ENCODE measurements at regions of chr11 and their contacts with region 1.

Region 1: DNA sequence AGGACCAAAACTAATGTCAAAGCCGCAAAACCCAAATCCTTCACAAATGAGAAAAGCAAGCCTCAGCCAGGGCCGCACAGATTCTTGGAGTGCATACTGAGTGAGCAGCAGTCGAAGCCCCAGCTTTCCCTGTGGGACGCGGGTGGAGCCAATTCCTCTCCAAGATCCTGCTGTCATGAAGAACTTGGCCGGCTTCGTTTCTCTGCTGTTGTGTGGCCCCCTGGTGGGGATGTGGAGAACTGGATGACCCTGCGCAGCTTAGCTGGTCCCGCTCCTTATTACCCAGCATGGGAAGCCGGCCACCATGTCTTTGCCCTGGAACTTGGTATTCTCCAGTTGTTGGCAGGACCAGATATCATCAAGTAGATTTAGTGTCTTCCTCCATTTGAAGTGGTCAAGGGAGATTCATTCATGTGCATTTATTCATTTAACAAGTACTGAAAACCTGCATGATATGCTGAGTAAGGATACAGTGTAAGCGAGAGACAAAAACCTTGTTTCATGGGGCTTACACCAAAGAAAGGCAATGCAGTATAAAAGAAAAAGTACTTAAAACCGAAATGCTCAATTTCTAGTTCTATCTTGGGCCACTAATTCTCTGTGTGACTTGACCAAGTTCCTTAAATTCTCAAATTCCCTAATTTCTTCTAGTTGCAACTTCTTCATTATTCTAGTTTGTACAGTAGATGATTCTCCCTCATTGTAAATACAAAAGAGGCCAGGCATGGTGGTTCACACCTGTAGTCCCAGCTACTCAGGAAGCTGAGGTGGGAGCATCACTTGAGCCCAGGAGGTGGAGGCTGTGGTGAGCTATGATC is 56.7 kb upstream of the CRTAM start:
- DNase-seq: peak; percentile 63
- ATAC-seq: peak; percentile 97
- H3K4me3 ChIP-seq: no peak overlapping the region
- H3K27ac ChIP-seq: no peak overlapping the region
- H3K4me1 ChIP-seq: no peaks in the 10 kb centered on the region
- H3K27me3 ChIP-seq: no peaks in the 10 kb centered on the region
- CTCF ChIP-seq: peak; percentile 97

Region 2: GRCh38 chr11:122578168-122578825 is 203.3 kb before region 1 on chr11:
- CTCF ChIA-PET with region 1: no interaction called
- POLR2A ChIA-PET with region 1: no interaction called
- in situ Hi-C with region 1: no loop called
- intact Hi-C with region 1: loop called (anchors 1 kb)
- DNase-seq: no peak
- ATAC-seq: no peak
- H3K4me3 ChIP-seq: no peak overlapping the region
- H3K27ac ChIP-seq: no peak overlapping the region
- H3K4me1 ChIP-seq: no peaks in the 10 kb centered on the region; the same call in 1 of the 2 replicates
- H3K27me3 ChIP-seq: no peaks in the 10 kb centered on the region
- CTCF ChIP-seq: peak; percentile 38

Region 3: DNA sequence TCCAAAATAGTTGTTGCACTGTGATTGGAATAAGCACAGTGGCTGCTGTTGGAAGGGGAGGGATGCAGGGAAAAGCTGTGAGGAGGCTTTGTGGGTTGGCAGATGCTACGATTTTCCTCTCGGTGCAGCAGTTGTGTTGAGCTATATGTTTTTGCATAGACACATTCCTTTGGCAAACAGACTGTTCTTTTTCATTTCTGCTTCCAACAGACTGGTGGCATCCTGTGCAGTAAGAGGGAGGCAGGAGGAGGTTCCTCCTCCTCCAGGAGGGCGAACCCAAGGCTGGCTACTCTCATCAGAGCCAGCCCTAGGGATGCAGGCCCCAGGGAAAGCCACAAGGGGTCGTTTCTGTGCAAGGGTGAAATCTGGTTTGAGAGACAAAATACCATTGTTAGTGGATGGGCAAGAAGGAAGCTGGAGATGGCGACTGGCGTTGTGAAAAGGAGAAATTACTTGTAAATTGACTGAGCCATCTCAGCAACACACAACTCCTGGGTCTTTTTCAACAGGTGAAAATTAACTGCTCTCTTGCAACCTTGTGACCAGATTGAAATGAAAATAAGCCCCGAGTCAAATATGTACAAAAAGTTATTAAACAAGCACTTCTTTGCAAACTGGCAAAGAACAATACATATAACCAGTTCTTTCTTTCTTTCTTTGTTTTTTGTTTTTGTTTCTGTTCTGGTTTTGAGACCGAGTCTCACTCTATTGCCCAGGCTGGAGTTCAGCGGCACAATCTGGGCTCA is 152.6 kb before region 1 on chr11:
- CTCF ChIA-PET with region 1: interaction called, 16 read pairs
- POLR2A ChIA-PET with region 1: no interaction called
- in situ Hi-C with region 1: no loop called
- intact Hi-C with region 1: loop called (anchors 1 kb)
- DNase-seq: peak; percentile 60
- ATAC-seq: peak; percentile 88
- H3K4me3 ChIP-seq: no peak overlapping the region
- H3K27ac ChIP-seq: no peak overlapping the region
- H3K4me1 ChIP-seq: no peaks in the 10 kb centered on the region
- H3K27me3 ChIP-seq: no peaks in the 10 kb centered on the region
- CTCF ChIP-seq: peak; percentile 96

Region 4: DNA sequence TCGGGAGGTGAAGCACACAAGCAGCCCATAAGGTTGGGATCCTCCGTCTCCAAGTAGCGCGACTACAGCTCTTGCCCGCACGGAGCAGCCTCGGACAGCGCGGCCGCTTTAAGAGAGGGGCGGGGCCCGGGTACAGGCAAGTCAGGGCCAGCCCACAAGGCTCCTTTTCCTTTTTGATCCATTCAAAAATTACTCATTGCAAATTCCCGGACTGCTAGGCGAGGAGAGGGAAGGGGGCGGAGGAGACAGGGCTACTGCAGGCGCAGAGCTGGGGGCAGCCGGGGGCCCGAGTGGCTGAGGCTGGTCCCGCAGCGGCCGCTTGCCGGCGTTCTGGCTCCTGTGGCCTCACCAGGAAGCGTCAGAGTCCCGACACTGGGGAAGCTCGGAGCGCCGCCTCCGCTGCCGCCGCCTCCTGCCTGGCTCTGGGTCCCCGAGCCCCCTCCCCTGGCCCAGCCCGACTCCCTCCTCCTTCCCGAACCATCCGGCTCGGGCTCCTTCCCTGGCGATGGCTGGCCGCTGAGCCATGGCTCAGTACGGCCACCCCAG is 126.0 kb before region 1 on chr11 and contains the start of gene UBASH3B:
- CTCF ChIA-PET with region 1: interaction called, 10 read pairs
- POLR2A ChIA-PET with region 1: no interaction called
- in situ Hi-C with region 1: no loop called
- intact Hi-C with region 1: no loop called
- DNase-seq: peak; percentile 57
- ATAC-seq: peak; percentile 89
- H3K4me3 ChIP-seq: peak within 1 kb of the TSS; percentile 68 to 82
- H3K27ac ChIP-seq: peak within 1 kb of the TSS; percentile 78
- H3K4me1 ChIP-seq: peaks cover 27% of the 10 kb centered on the region
- H3K27me3 ChIP-seq: no peaks in the 10 kb centered on the region
- CTCF ChIP-seq: no peak; the same call in 1 of the 2 replicates
- total RNA-seq, gene UBASH3B: 55.1 TPM